ENCODE measurements at regions of chr19 and their contacts with region 1.

Region 1: GRCh38 chr19:35693830-35694599 is 10.3 kb upstream of the ZBTB32 start:
- DNase-seq: peak; percentile 88
- CTCF ChIP-seq: peak; percentile 99

Region 2: GRCh38 chr19:35462476-35462953 is 231.5 kb before region 1 on chr19:
- CTCF ChIA-PET with region 1: no interaction called
- POLR2A ChIA-PET with region 1: no interaction called
- DNase-seq: peak; percentile 74
- CTCF ChIP-seq: peak; percentile 39

Region 3: DNA sequence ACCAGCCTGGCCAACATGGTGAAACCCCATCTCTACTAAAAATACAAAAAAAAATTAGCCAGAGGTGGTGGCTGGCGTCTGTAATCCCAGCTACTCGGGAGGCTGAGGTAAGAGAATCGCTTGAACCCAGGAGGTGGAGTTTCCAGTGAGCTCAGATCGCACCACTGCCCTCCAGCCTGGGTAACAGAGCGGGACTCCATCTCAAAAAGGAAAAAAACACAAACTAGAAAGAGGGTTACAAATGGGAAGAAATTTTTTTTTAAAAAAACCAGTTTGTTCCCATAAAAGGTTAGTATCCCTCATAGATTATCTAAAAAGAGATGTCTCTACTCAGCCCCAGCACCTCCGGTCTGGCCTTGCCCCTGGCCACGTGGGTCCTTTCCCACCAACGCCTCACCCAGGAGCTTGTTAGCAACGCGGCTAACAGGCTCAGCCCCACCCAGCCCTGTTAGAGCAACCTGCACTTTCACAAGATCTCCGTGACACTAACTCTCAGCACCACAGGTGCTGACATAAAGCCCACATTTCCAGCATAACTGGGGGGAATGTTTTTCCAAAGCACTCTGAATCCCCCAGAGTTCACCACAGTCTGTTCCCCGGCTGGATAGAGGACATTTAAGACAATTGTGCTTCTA is 184.9 kb before region 1 on chr19:
- CTCF ChIA-PET with region 1: no interaction called
- POLR2A ChIA-PET with region 1: no interaction called
- DNase-seq: peak; percentile 83
- CTCF ChIP-seq: no peak

Region 4: GRCh38 chr19:35636651-35637050 is 57.4 kb before region 1 on chr19:
- CTCF ChIA-PET with region 1: no interaction called
- POLR2A ChIA-PET with region 1: no interaction called
- DNase-seq: no peak
- CTCF ChIP-seq: no peak

Region 5: DNA sequence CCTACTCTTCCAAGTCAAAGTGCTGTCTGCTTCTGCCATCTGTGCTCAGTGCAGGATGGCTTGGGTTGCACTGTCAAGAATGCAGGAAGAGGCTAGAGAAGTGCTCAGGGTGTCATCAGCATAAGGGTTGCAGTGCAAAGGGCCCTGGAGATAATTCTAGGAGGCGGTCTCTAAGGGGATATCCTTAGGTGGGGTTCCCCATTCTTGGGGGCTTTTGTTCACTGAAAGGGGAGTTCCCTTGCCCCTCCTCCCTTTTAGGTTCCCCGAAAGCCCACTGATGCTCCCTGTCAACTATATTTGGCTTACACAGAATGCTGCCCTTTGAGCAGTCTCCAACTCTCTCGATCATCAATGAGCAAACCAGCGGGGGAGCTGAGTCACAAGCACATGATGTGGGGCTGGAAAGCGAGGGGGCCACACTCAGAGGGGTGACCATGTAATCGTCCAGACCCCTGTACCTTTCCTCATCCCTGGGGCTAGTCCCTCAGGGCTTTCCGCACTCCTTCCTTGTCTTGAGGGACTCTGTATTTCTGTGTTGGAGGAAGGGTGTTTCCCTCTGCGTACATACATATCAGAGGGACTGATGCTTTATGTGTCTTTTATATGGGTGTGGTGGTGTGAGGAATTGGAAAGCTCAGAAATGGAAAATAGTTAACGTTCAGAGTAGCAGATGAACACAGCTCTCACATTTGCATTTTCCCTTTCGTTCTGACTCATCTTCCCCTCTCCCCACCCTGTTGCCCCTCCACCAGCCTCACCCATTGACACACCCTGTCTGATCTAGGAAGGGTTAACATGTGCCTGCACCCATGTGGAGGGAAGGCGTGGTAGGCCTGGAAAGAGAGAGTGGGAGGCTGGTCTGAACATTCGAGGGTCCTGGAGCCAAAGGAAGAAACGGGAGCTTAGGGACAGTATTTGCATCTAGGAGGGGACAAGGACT is 17.0 kb after region 1 on chr19:
- CTCF ChIA-PET with region 1: interaction called, 184 read pairs
- POLR2A ChIA-PET with region 1: interaction called, 8 read pairs
- DNase-seq: peak; percentile 68
- CTCF ChIP-seq: no peak